HEK293 (cell line): ENCODE measurements at regions of chr11 and their contacts with region 1.

Region 1: GRCh38 chr11:64304316-64305072 is 830 bp upstream of the ESRRA start:
- H3K4me3 ChIP-seq: peak overlapping the region; percentile 46
- H3K27ac ChIP-seq: peak overlapping the region; percentile 70
- H3K4me1 ChIP-seq: no peaks in the 10 kb centered on the region
- CTCF ChIP-seq: peak; percentile 87

Region 2: GRCh38 chr11:64044730-64045393 is 259.6 kb before region 1 on chr11:
- CTCF ChIA-PET with region 1: no interaction called
- POLR2A ChIA-PET with region 1: no interaction called
- H3K4me3 ChIP-seq: no peak overlapping the region
- H3K27ac ChIP-seq: no peak overlapping the region
- H3K4me1 ChIP-seq: no peaks in the 10 kb centered on the region
- CTCF ChIP-seq: no peak

Region 3: DNA sequence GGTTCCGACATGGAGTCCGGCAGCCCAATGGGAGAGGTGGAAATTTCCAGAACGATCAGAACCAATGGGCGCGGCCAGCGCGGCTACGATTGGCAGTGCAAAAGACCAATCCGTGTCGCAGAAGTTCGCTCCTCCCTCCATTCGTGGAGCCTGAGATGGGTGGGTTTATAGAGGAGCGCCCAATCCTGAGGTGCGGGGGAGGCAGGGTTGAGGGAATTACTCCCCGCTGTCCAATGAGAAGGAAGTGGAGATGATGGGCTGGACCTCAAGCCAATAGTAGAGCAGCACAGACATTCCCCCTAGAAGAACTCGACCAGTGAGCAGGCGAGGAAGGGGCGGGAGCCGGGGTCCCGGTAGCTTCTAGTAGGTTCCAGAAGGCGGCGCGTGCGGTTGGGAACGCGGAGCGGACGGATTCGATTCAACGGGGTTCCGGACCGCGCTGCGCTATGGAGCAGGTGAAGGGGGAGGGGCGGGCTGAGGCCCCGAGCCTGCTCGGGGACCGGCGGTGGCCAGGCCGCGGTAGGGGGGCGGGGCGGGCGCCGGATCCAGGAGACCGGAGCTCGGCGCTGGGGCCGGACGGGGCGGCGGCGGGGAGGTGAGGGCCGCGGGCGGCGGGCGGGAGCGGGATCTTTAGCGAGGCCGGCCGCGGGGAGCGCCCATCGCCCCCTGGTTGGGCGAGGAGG is 118.5 kb before region 1 on chr11 and contains the start of gene STIP1:
- CTCF ChIA-PET with region 1: interaction called, 8 read pairs
- POLR2A ChIA-PET with region 1: interaction called, 18 read pairs
- H3K4me3 ChIP-seq: peak within 1 kb of the TSS; percentile 75
- H3K27ac ChIP-seq: peak within 1 kb of the TSS; percentile 82
- H3K4me1 ChIP-seq: peaks cover 3% of the 10 kb centered on the region; the same call in 1 of the 2 replicates
- CTCF ChIP-seq: peak; percentile 65

Region 4: DNA sequence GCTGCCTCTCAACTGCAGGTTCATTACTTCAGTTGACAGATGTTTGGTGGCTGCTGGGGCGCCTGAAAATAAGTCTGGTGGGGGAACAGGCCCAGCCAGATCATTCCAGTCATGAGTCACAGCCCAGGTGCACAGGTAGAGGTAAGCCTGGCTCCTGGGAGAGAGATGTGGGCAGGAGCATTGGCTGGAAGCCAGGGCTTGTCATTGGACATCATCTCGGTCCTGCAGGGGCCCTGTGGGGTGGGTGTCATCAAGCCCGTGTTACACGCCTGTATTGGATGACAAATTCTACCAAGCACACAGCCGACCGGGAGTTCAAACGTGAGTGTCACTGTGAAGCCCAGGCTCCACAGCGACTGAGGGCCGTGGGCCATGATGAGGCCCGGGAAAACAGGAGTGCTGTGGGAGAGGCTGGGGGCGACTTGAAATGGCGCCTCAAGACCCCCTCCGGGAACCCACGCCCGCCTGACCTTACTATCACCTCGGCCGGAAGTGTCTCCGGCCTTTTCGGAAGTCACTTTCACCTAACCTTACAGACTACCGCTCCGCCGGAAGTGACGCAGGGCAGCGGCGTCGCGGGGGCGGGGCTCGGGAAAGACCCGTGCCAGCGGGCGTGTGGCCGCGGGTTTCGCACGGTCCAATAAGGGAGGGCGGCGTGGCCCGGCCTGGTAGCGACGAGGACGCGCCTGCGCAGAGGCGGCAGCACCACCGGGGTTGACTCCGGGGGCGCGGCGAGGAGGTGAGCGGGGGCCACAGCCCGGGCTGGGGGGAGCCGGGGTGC is 63.9 kb before region 1 on chr11 and contains the start of gene FKBP2:
- CTCF ChIA-PET with region 1: interaction called, 13 read pairs
- POLR2A ChIA-PET with region 1: interaction called, 8 read pairs
- H3K4me3 ChIP-seq: peak within 1 kb of the TSS; percentile 75
- H3K27ac ChIP-seq: peak within 1 kb of the TSS; percentile 83
- H3K4me1 ChIP-seq: no peaks in the 10 kb centered on the region
- CTCF ChIP-seq: no peak

Region 5: GRCh38 chr11:64251016-64251752 is 53.3 kb before region 1 on chr11 and contains the start of gene PLCB3:
- CTCF ChIA-PET with region 1: interaction called, 48 read pairs
- POLR2A ChIA-PET with region 1: interaction called, 3 read pairs
- H3K4me3 ChIP-seq: peak within 1 kb of the TSS; percentile 48
- H3K27ac ChIP-seq: peak within 1 kb of the TSS; percentile 3; the same call in 1 of the 2 replicates
- H3K4me1 ChIP-seq: peaks cover 10% of the 10 kb centered on the region
- CTCF ChIP-seq: peak; percentile 94

Region 6: GRCh38 chr11:64278576-64279190 is 25.8 kb before region 1 on chr11:
- CTCF ChIA-PET with region 1: interaction called, 13 read pairs
- POLR2A ChIA-PET with region 1: interaction called, 3 read pairs
- H3K4me3 ChIP-seq: no peak overlapping the region
- H3K27ac ChIP-seq: no peak overlapping the region
- H3K4me1 ChIP-seq: no peaks in the 10 kb centered on the region
- CTCF ChIP-seq: no peak

Region 7: GRCh38 chr11:64317957-64318693 is 13.6 kb after region 1 on chr11 and contains the start of gene PRDX5:
- CTCF ChIA-PET with region 1: interaction called, 11 read pairs
- POLR2A ChIA-PET with region 1: interaction called, 43 read pairs
- H3K4me3 ChIP-seq: peak within 1 kb of the TSS; percentile 90
- H3K27ac ChIP-seq: peak within 1 kb of the TSS; percentile 88
- H3K4me1 ChIP-seq: no peaks in the 10 kb centered on the region
- CTCF ChIP-seq: peak; percentile 95

Region 8: DNA sequence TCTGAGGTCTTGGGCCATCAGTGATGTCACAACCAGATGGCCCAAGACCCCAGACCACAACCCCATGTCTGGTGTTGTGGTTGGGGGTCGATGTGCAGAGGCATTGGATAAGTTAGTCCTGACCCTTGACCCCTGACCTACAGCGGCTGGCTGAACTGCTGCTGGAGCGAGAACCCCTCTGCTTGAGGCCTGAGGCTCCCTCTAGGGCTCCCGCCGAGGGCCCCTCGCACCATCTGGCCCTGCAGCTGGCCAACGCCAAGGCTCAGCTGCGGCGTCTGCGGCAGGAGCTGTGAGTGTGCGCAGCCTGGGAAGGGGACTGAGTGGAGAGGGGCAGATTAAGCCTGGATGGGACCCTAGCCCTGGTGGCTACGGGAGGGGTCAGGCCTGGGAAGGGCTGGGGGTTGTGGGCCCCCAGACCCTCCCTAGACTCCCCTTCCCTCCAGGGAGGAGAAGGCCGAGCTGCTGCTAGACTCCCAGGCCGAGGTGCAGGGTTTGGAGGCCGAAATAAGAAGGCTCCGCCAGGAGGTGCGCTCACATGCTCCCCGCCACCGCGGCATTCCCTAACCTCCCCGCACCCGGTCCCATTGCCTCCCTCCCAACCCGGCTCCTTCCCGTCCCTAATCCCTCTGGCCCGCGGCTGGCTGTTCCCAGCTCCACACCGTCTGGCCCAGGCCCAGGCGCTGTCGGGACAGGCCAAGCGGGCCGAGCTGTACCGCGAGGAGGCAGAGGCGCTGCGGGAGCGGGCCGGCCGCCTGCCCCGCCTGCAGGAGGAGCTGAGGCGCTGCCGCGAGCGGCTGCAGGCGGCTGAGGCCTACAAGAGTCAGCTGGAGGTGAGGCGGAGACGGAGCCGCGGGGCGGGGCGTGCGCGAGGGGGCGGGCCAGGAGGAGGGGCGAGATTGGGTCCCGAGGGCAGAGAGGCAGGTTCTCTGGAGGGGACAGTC is 37.6 kb after region 1 on chr11:
- CTCF ChIA-PET with region 1: interaction called, 13 read pairs
- POLR2A ChIA-PET with region 1: interaction called, 3 read pairs
- H3K4me3 ChIP-seq: peak overlapping the region; percentile 25
- H3K27ac ChIP-seq: no peak overlapping the region; the same call in 1 of the 2 replicates
- H3K4me1 ChIP-seq: no peaks in the 10 kb centered on the region
- CTCF ChIP-seq: peak; percentile 39; the same call in 1 of the 2 replicates